Activated T-helper 1 cell treated with anti-CD3 and anti-CD28 coated beads, Interleukin-12 subunit alpha, Interleukin-12 subunit beta, Interleukin-2, Interleukin-4 antibody, amounts not matched to agents 30 ng/mL and 10 ng/mL and 1 ng/mL, durations not matched to agents 14 hours and 24 hours and 36 hours (primary cell): ENCODE measurements at regions of chr12 and their contacts with region 1.

Region 1: GRCh38 chr12:123232807-123233543 is at the starts of genes MPHOSPH9 and MTRFR:
- DNase-seq: peak; percentile 99
- H3K4me3 Mint-ChIP-seq: peak within 1 kb of the TSS; percentile 100
- H3K27ac Mint-ChIP-seq: peak within 1 kb of the TSS; percentile 99
- H3K4me1 Mint-ChIP-seq: peaks cover 68% of the 10 kb centered on the region
- H3K27me3 Mint-ChIP-seq: peaks cover 2% of the 10 kb centered on the region
- total RNA-seq, gene MPHOSPH9: 87.3 and 89.9 TPM in 2 replicates
- total RNA-seq, gene MTRFR: 32.6 and 34.2 TPM in 2 replicates

Region 2: GRCh38 chr12:122078141-122079032 is 1154.6 kb before region 1 on chr12 and contains the start of gene MLXIP:
- intact Hi-C with region 1: loop called (anchors 10 kb)
- DNase-seq: peak; percentile 88
- H3K4me3 Mint-ChIP-seq: peak within 1 kb of the TSS; percentile 94
- H3K27ac Mint-ChIP-seq: peak within 1 kb of the TSS; percentile 76
- H3K4me1 Mint-ChIP-seq: peaks cover 44% of the 10 kb centered on the region
- H3K27me3 Mint-ChIP-seq: peaks cover 6% of the 10 kb centered on the region
- total RNA-seq, gene MLXIP: 59.0 and 62.1 TPM in 2 replicates

Region 3: DNA sequence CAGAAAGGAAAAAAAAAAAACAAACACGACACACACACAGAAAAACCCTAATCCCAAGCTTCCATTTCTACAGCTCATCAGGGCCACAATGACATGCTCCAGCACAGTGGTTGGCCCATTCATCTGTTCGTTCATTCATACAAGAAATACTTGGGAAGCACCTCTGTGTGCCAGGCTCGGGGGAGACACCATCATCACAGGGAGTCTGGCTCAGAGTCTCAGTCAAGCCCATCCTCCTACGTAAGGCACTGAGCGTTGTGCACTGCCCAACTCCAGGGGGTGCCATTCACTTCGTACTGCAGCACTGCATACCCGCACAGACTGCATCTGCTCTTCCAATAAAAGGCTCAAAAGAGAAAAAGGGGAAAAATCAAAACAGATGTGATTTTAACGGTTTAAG is 352.3 kb before region 1 on chr12:
- intact Hi-C with region 1: loop called (anchors 5 kb)
- DNase-seq: no peak
- H3K4me3 Mint-ChIP-seq: no peak overlapping the region
- H3K27ac Mint-ChIP-seq: no peak overlapping the region
- H3K4me1 Mint-ChIP-seq: peaks cover 87% of the 10 kb centered on the region
- H3K27me3 Mint-ChIP-seq: peaks cover 16% of the 10 kb centered on the region

Region 4: GRCh38 chr12:123043536-123044001 is 189.4 kb before region 1 on chr12:
- intact Hi-C with region 1: loop called (anchors 1 kb)
- DNase-seq: peak; percentile 60
- H3K4me3 Mint-ChIP-seq: no peak overlapping the region
- H3K27ac Mint-ChIP-seq: peak overlapping the region; percentile 71
- H3K4me1 Mint-ChIP-seq: peaks cover 22% of the 10 kb centered on the region
- H3K27me3 Mint-ChIP-seq: no peaks in the 10 kb centered on the region

Region 5: DNA sequence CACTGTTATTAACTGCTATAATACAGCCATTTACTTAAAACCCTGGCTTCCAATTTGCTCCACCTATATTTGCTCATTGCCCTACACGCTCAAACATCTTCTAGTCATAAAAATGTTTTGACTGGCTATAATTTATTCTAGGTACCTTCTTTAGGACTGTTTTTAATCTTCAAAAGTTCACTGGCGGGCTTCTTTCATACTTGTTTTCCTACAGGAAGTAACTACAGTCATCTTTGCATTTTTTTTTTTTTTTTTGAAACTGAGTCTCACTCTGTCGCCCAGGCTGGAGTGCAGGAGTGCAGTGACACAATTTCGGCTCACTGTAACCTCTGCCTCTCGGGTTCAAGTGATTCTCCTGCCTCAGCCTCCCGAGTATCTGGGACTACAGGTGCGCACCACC is 32.6 kb before region 1 on chr12:
- intact Hi-C with region 1: loop called (anchors 1 kb)
- DNase-seq: no peak
- H3K4me3 Mint-ChIP-seq: no peak overlapping the region
- H3K27ac Mint-ChIP-seq: peak overlapping the region; percentile 68
- H3K4me1 Mint-ChIP-seq: peaks cover 21% of the 10 kb centered on the region
- H3K27me3 Mint-ChIP-seq: no peaks in the 10 kb centered on the region

Region 6: GRCh38 chr12:123580772-123581171 is 347.8 kb after region 1 on chr12:
- intact Hi-C with region 1: loop called (anchors 1 kb)
- DNase-seq: no peak
- H3K4me3 Mint-ChIP-seq: no peak overlapping the region
- H3K27ac Mint-ChIP-seq: no peak overlapping the region
- H3K4me1 Mint-ChIP-seq: peaks cover 18% of the 10 kb centered on the region
- H3K27me3 Mint-ChIP-seq: no peaks in the 10 kb centered on the region